MCF 10A (cell line): ENCODE measurements at regions of chr1 and their contacts with region 1.

Region 1: GRCh38 chr1:217805787-217806186 is 174.6 kb downstream of the SPATA17 start:
- DNase-seq: no peak
- H3K4me3 Mint-ChIP-seq: no peak overlapping the region
- H3K27ac Mint-ChIP-seq: no peak overlapping the region
- H3K4me1 Mint-ChIP-seq: no peaks in the 10 kb centered on the region
- H3K27me3 Mint-ChIP-seq: no peaks in the 10 kb centered on the region
- CTCF ChIP-seq: no peak

Region 2: GRCh38 chr1:217734973-217735372 is 70.8 kb before region 1 on chr1:
- CTCF ChIA-PET with region 1: no interaction called
- POLR2A ChIA-PET with region 1: interaction called, 3 read pairs
- intact Hi-C with region 1: loop called (anchors 2 kb)
- DNase-seq: peak; percentile 68
- H3K4me3 Mint-ChIP-seq: no peak overlapping the region
- H3K27ac Mint-ChIP-seq: no peak overlapping the region
- H3K4me1 Mint-ChIP-seq: peaks cover 27% of the 10 kb centered on the region
- H3K27me3 Mint-ChIP-seq: no peaks in the 10 kb centered on the region
- CTCF ChIP-seq: no peak

Region 3: DNA sequence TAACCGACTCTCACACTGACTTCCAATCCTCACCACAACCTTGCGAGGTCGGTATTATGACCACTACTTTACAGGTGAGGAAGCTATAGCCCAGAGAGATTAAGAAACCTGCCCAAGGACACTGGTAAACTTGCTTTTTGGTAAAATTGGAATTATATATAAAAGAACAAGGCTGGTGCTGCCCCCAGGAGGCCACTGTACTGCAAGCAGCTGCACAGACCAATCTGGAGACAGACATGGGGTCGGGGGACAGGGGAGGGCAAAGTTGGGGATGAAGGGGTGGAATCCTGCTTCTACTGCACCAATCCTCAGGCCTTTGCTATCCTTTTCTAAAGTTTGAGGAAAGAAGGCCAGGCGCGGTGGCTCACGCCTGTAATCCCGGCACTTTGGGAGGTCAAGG is 106.1 kb after region 1 on chr1:
- CTCF ChIA-PET with region 1: no interaction called
- POLR2A ChIA-PET with region 1: no interaction called
- intact Hi-C with region 1: no loop called
- DNase-seq: peak; percentile 45
- H3K4me3 Mint-ChIP-seq: no peak overlapping the region
- H3K27ac Mint-ChIP-seq: no peak overlapping the region
- H3K4me1 Mint-ChIP-seq: no peaks in the 10 kb centered on the region
- H3K27me3 Mint-ChIP-seq: peaks cover 15% of the 10 kb centered on the region
- CTCF ChIP-seq: peak; percentile 52

Region 4: GRCh38 chr1:217965156-217965786 is 159.5 kb after region 1 on chr1:
- CTCF ChIA-PET with region 1: no interaction called
- POLR2A ChIA-PET with region 1: no interaction called
- intact Hi-C with region 1: no loop called
- DNase-seq: no peak
- H3K4me3 Mint-ChIP-seq: no peak overlapping the region
- H3K27ac Mint-ChIP-seq: no peak overlapping the region
- H3K4me1 Mint-ChIP-seq: no peaks in the 10 kb centered on the region
- H3K27me3 Mint-ChIP-seq: peaks cover 41% of the 10 kb centered on the region
- CTCF ChIP-seq: no peak